Lower leg skin (tissue), 4 donors: ENCODE measurements at regions of chr7 and their contacts with region 1.

Region 1: DNA sequence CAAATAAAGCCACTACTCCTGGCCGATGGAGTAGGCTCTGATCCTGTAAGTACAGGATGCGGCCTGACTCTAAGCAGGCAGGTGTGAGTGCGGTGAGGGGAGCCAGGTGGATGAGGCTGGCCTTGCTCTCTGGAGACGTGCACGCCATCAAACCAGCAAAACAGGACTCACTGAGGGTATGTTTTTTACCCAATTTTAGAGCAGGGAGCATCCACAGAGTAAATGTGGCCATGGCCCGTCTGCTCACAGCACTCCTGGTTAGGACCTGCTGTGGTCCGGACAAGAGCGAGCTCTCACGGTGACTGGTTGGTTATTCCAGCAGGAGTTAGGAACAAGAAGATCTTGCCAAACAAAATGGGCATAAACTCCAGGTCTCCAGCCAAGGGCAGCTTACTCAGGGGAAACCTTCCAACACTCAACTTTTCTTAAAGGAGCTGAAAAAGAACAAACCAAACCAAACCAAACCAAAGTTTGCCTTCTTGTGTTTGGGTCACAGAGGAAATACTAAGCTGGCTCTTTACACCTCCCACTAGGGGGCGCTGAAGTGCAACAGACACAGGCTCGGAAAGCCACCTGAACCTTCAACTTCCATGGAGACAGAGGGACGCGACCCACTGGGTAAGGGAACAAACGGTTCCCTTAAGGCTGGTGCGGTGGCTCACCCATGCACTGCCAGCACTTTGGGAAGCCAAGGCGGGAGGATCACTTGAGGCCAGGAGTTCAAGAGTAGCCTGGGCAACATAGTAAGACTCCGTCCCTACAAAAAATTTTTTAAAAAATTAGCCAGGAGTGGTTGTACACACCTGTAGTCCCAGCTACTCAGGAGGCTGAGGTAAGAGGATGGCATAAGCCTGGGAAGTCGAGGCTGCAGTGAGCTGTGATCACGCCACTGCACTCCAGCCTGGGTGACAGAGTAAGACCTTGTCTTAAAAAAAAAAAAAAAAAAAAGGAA is 122.4 kb downstream of the CLEC2L start:
- DNase-seq: peak; percentile 73 to 96
- H3K4me3 ChIP-seq: no peak overlapping the region
- CTCF ChIP-seq: peak in 1 of 3 donors; percentile 65
- POLR2A ChIP-seq: no peak

Region 2: GRCh38 chr7:139777948-139778841 is 132.3 kb after region 1 on chr7 and contains the start of gene HIPK2:
- intact Hi-C with region 1: loop called (anchors 10 kb)
- DNase-seq: peak in 1 of 2 donors; percentile 92
- H3K4me3 ChIP-seq: peak within 1 kb of the TSS; percentile 75
- CTCF ChIP-seq: no peak
- POLR2A ChIP-seq: no peak
- total RNA-seq, gene HIPK2: 4.5 to 14.9 (median 10.4) TPM

Region 3: DNA sequence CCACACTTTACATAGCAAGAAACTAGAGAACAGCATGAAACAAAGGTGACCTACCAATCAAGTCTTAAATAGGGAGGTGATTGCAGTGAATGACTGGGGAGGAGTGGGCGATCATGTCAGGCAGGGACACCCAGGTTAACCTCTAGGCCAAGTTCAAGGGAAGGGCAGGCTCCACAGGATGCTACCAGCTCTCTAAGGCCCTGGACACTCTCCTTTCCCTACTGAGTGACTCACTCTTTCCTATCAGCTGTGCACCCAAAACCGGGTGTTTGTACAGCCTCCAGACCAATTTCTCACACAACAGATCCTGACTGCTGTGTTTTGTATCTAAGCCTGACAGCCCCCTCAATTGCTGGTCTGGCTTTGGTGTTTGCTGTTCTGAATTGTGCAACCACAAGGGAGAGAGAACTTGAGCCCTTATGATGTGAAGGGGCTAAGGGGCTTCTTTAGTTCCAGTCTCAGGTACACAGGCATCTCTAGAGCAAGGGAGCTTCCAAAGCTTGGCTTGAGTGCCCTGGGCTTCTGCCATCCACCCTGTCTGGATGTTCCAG is 291.0 kb after region 1 on chr7:
- intact Hi-C with region 1: no loop called
- DNase-seq: peak in 1 of 2 donors; percentile 69
- H3K4me3 ChIP-seq: no peak overlapping the region
- CTCF ChIP-seq: no peak
- POLR2A ChIP-seq: no peak